Upper lobe of right lung (tissue), 1 donor: ENCODE measurements at regions of chr6 and their contacts with region 1.

Region 1: DNA sequence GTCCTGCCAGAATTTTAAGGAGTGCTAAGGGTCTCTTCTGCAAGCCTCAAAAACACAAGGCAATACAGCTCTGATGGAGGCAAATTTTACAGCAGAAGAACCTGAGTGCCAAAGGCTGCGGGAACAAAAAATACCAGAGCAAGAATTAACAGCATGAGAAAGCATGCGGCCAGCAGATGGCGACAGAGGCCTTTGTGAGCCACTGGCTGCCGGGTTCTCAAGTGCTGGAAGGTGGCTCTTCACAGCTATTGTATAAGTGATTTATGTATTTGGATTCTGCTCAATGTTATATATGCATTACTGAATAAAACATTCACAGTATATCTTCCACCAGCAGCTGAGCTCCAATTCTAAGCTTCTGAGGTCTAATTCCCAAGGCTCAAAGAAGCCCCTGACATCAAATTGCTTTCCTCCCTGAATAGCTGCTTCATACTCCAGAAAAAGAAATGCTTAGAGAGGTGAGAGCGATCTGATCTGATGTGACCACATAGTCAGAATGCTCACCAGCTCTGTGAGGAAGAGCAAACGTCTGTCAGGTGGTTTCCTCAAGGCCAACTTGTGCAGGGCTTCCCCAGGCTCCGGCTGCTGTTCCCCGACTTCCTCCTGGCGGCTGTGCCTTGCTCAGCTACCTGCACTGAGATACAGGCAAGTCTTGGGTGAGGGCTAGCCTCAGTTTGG is 58.6 kb downstream of the PPP1R3G start:
- DNase-seq: peak; percentile 88
- ATAC-seq: peak; percentile 82
- H3K4me3 ChIP-seq: no peak overlapping the region
- H3K27ac ChIP-seq: no peak overlapping the region
- H3K4me1 ChIP-seq: no peaks in the 10 kb centered on the region
- H3K27me3 ChIP-seq: no peaks in the 10 kb centered on the region
- CTCF ChIP-seq: peak; percentile 96

Region 2: GRCh38 chr6:5379647-5380242 is 236.0 kb after region 1 on chr6:
- intact Hi-C with region 1: loop called (anchors 10 kb)
- DNase-seq: no peak
- ATAC-seq: peak; percentile 57
- H3K4me3 ChIP-seq: no peak overlapping the region
- H3K27ac ChIP-seq: no peak overlapping the region
- H3K4me1 ChIP-seq: no peaks in the 10 kb centered on the region
- H3K27me3 ChIP-seq: no peaks in the 10 kb centered on the region
- CTCF ChIP-seq: peak; percentile 46